A673 (cell line): ENCODE measurements at regions of chr7 and their contacts with region 1.

Region 1: DNA sequence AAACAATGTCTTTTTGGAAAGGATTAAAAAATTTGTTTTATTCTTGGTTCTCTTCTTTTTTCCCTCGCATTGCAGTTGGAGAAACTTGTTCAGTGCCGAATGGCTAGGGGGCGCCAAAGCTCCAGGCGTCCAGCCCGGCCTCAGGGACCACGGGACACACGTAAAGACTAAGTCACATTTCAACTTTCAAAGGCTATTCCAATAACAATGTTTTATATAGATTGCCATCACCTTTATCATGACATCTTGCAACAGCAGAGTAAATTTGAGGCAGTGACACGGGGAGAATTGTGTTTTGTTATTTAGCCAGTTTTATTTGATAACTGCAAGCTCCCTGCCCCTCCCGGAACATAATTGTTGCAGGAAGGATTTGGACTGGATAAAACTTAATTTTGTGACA is 2.2 kb upstream of the IGFBP3 start:
- DNase-seq: peak; percentile 72
- H3K4me3 ChIP-seq: no peak overlapping the region
- H3K27ac ChIP-seq: no peak overlapping the region
- H3K4me1 ChIP-seq: peaks cover 5% of the 10 kb centered on the region
- H3K27me3 ChIP-seq: peaks cover 69% of the 10 kb centered on the region
- CTCF ChIP-seq: peak; percentile 94

Region 2: DNA sequence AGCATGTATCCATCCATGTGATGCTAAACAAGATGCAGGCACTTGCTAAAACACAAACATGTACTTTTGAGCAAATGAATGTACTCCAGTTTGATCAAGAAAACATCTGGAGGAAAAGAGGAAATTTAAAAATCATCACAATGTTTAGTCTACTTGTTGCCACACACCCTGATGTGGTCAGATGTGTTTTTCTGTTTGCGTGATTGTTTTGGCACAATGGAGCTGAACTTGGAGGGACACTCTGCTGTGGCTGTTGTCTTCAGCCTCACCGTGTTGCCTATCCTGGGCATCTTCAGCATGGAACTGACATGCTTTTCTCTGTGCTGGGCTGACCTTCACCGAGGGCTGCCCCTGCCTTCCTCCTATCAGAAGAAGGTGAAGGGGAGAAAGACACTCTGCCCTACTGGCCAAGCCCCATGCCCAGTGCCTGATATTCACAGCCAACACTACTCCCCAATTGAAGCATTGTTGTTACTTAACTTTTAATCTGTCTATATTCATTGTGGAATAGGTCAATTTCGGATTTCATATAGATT is 266.0 kb after region 1 on chr7:
- CTCF ChIA-PET with region 1: no interaction called
- POLR2A ChIA-PET with region 1: no interaction called
- intact Hi-C with region 1: no loop called
- DNase-seq: no peak
- H3K4me3 ChIP-seq: no peak overlapping the region
- H3K27ac ChIP-seq: no peak overlapping the region
- H3K4me1 ChIP-seq: no peaks in the 10 kb centered on the region
- H3K27me3 ChIP-seq: no peaks in the 10 kb centered on the region
- CTCF ChIP-seq: no peak

Region 3: DNA sequence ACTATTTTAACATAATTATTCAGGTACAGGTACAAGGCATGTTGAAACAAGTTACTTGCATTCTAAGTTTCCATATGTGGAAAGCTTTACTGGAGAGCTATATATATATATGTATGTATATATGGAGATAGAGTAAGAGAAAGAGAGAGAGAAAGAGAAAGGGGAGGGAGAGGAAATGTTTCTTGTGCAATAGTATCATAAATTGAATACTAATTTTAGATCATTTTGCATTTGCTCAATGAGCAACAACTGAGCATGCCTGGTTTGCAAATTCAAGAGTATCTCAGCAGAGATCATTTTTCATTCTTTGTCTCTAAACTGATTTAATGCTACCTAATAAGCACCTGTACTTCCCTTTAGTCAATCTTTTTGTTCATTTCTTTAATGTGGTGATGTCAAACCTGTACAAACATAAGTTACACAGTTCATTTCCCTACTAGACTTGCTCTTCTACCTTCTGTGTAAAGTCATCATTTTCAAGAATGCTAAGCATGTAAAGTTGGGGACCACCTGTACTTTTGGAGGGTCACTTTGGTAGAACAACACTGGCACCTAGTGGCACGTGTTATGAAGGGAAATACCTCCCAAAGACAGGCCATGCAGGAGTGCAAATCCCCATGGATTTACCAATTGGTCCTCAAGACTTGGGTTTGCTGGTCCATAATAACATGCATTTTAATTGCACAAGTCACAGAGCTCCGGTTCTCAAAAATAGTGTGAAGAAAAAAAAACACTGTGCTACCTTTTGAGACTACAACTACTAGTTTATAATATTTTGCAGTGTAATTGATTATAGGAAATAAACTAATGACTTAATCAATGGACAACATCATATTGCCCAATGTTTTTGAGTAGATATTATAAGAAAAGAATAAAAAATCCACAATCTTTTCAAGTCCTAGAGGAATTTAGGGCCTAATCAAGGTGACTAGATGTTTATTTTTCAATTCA is 429.0 kb after region 1 on chr7:
- CTCF ChIA-PET with region 1: no interaction called
- POLR2A ChIA-PET with region 1: no interaction called
- intact Hi-C with region 1: loop called (anchors 5 kb)
- DNase-seq: peak; percentile 33
- H3K4me3 ChIP-seq: no peak overlapping the region
- H3K27ac ChIP-seq: no peak overlapping the region
- H3K4me1 ChIP-seq: no peaks in the 10 kb centered on the region
- H3K27me3 ChIP-seq: no peaks in the 10 kb centered on the region
- CTCF ChIP-seq: peak; percentile 49

Region 4: DNA sequence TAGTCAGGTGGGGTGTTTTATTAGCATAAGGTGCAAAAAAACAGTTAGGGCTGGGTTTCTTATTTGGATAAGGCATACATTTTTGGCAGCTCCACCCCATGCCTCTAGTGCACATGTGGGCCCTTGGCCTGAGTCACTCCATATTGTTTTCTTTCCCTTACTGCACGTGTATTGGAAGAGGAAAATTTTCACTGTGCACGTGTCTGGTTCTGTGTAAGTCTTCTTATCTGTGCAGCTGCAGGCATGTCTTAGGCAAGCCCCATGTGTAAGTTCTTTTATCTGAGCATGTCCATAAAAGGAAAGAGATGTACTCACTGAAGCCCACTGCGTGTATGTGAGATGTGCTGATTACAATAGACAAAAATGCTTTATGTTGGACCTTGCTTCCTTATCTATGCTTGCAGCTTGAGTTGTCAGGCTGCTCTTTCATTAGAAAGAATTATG is 538.1 kb after region 1 on chr7:
- CTCF ChIA-PET with region 1: no interaction called
- POLR2A ChIA-PET with region 1: no interaction called
- intact Hi-C with region 1: no loop called
- DNase-seq: no peak
- H3K4me3 ChIP-seq: no peak overlapping the region
- H3K27ac ChIP-seq: no peak overlapping the region
- H3K4me1 ChIP-seq: no peaks in the 10 kb centered on the region
- H3K27me3 ChIP-seq: no peaks in the 10 kb centered on the region
- CTCF ChIP-seq: no peak

Region 5: GRCh38 chr7:46776790-46777189 is 853.5 kb after region 1 on chr7:
- CTCF ChIA-PET with region 1: no interaction called
- POLR2A ChIA-PET with region 1: no interaction called
- intact Hi-C with region 1: loop called (anchors 5 kb)
- DNase-seq: peak; percentile 66
- H3K4me3 ChIP-seq: no peak overlapping the region
- H3K27ac ChIP-seq: no peak overlapping the region
- H3K4me1 ChIP-seq: no peaks in the 10 kb centered on the region
- H3K27me3 ChIP-seq: no peaks in the 10 kb centered on the region
- CTCF ChIP-seq: peak; percentile 69

Region 6: GRCh38 chr7:47088329-47089067 is 1165.2 kb after region 1 on chr7:
- CTCF ChIA-PET with region 1: no interaction called
- POLR2A ChIA-PET with region 1: no interaction called
- intact Hi-C with region 1: loop called (anchors 2 kb)
- DNase-seq: peak; percentile 76
- H3K4me3 ChIP-seq: no peak overlapping the region
- H3K27ac ChIP-seq: no peak overlapping the region
- H3K4me1 ChIP-seq: no peaks in the 10 kb centered on the region
- H3K27me3 ChIP-seq: no peaks in the 10 kb centered on the region
- CTCF ChIP-seq: peak; percentile 87

Region 7: GRCh38 chr7:47179812-47180515 is 1256.7 kb after region 1 on chr7:
- CTCF ChIA-PET with region 1: no interaction called
- POLR2A ChIA-PET with region 1: no interaction called
- intact Hi-C with region 1: loop called (anchors 2 kb)
- DNase-seq: peak; percentile 55
- H3K4me3 ChIP-seq: no peak overlapping the region
- H3K27ac ChIP-seq: no peak overlapping the region
- H3K4me1 ChIP-seq: no peaks in the 10 kb centered on the region
- H3K27me3 ChIP-seq: peaks cover 10% of the 10 kb centered on the region
- CTCF ChIP-seq: peak; percentile 73

Region 8: DNA sequence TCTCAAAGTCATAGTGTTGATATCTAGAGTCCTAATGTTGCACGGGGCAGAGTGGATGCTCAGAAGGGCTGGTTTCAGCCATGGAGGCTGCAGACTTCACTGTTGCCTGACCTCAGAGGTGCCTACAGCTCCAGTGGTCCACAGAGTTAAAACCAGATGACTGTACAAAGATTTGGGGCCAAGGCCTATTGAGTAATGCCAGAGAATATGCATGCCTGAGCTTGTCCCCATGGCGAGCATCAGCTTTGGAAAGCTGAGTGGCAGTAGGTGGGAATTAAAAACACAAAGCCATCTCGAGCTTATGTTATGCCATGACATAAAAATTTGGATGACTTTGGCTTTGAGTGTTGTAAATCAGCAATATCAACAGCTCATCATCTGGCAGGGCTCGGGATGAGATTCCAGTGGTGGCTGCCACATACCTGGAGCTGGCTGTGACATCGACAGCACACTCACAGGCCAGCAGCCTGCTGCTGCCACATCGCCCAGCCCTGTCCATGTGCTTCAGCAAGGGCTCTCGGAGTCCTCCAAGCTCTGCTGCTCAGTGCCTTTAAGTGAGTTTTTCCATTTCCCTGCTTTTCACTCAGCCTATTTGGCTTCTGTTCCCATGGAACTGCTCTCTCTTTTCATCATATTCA is 1279.0 kb after region 1 on chr7:
- CTCF ChIA-PET with region 1: interaction called, 13 read pairs
- POLR2A ChIA-PET with region 1: no interaction called
- intact Hi-C with region 1: no loop called
- DNase-seq: no peak
- H3K4me3 ChIP-seq: no peak overlapping the region
- H3K27ac ChIP-seq: no peak overlapping the region
- H3K4me1 ChIP-seq: no peaks in the 10 kb centered on the region
- H3K27me3 ChIP-seq: peaks cover 4% of the 10 kb centered on the region
- CTCF ChIP-seq: no peak

Region 9: GRCh38 chr7:47254081-47255006 is 1331.1 kb after region 1 on chr7:
- CTCF ChIA-PET with region 1: no interaction called
- POLR2A ChIA-PET with region 1: no interaction called
- intact Hi-C with region 1: loop called (anchors 10 kb)
- DNase-seq: peak; percentile 21
- H3K4me3 ChIP-seq: peak overlapping the region; percentile 31
- H3K27ac ChIP-seq: no peak overlapping the region
- H3K4me1 ChIP-seq: no peaks in the 10 kb centered on the region
- H3K27me3 ChIP-seq: no peaks in the 10 kb centered on the region
- CTCF ChIP-seq: peak; percentile 61